ENCODE measurements at regions of chr18 and their contacts with region 1.

Region 1: DNA sequence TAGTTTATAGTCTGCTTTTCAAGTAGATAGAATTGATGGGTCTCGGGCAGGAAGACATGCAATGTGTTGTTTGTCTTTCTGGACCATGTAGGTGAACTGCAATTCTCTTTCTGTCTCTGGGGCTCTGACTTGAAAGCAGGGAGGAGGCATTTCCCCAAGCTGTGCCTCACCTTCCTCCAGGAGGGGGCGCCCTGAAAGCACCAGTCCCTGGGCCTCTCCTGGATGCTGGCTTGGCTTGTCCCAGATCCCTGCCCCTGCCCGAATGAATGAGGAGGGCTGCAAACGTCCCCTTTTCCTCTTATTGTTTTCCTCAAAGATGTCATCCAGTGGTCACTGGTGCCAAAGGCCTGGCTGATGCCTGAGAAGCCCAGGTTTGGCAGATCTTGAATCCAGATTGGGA is 270.6 kb downstream of the CELF4 start:
- H3K4me3 ChIP-seq: no peak overlapping the region
- H3K27ac ChIP-seq: no peak overlapping the region
- H3K4me1 ChIP-seq: peaks cover 7% of the 10 kb centered on the region
- CTCF ChIP-seq: peak; percentile 36; the same call in 1 of the 2 replicates

Region 2: GRCh38 chr18:36960038-36960437 is 334.9 kb before region 1 on chr18:
- CTCF ChIA-PET with region 1: no interaction called
- POLR2A ChIA-PET with region 1: no interaction called
- H3K4me3 ChIP-seq: no peak overlapping the region
- H3K27ac ChIP-seq: no peak overlapping the region
- H3K4me1 ChIP-seq: no peaks in the 10 kb centered on the region
- CTCF ChIP-seq: no peak

Region 3: DNA sequence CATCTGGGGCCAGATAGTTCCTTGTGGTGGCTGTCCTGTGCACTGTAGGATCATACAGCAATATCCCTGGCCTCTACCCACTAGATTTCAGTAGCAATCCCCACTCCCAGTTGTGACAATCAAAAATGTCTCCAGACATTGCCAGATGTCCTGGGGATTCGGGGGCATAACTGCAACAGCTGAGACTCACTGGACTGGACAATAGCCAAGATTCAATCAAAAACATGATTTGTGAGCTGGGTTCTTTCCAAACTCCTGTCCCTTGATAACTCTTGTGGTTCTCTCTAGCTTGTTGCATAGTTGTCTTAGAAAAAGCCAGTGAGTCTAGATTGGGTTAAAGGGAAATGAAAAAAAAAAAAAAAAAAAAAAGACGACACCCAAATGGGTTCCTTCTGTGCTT is 22.7 kb before region 1 on chr18:
- CTCF ChIA-PET with region 1: interaction called, 10 read pairs
- POLR2A ChIA-PET with region 1: no interaction called
- H3K4me3 ChIP-seq: no peak overlapping the region
- H3K27ac ChIP-seq: no peak overlapping the region
- H3K4me1 ChIP-seq: no peaks in the 10 kb centered on the region
- CTCF ChIP-seq: no peak

Region 4: GRCh38 chr18:37335409-37335736 is 40.4 kb after region 1 on chr18:
- CTCF ChIA-PET with region 1: interaction called, 27 read pairs
- POLR2A ChIA-PET with region 1: no interaction called
- H3K4me3 ChIP-seq: no peak overlapping the region
- H3K27ac ChIP-seq: no peak overlapping the region
- H3K4me1 ChIP-seq: no peaks in the 10 kb centered on the region
- CTCF ChIP-seq: peak; percentile 96